ENCODE measurements at regions of chr7 and their contacts with region 1.

Region 1: DNA sequence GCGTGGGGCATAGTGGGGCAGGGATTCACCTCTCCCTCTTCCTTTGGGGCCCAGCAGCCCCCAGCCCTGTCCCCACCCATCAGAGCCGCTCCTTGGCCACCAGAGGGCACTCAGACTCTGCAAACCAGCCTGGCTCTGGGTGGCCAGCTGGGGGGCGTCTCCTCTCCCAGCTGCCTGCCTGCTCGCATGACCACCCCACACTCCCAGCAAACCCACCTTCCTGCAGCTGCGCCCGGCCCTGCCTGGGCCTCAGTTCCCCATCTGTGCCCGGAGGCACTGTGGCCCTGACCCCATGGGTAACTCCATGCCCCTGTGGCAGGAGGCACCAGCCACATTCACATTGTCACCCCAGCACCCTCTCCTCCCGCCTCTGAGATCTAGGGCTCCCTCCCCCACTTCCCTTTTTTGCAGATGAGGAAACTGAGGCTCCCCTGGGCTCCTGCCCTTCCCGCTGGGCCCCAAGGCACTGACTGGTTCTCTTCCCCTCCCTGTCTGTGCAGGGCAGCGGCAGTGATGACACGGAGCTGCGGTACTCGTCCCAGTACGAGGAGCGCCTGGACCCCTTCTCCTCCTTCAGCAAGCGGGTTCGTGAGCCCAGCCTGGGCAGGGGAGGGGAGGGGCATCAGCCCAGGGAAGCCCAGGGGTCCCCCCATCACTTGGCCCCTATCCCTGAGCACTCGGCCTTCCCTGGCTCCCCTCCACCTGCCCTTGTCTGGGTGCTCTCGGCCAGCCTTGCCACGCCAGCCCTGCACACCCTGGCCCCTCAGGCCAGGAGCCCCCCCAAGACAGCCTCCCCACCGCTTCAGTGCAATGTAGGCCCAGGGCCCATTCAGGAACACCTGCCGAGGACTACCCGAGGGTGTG is 6.9 kb upstream of the SH2B2 start:
- DNase-seq: no peak

Region 2: DNA sequence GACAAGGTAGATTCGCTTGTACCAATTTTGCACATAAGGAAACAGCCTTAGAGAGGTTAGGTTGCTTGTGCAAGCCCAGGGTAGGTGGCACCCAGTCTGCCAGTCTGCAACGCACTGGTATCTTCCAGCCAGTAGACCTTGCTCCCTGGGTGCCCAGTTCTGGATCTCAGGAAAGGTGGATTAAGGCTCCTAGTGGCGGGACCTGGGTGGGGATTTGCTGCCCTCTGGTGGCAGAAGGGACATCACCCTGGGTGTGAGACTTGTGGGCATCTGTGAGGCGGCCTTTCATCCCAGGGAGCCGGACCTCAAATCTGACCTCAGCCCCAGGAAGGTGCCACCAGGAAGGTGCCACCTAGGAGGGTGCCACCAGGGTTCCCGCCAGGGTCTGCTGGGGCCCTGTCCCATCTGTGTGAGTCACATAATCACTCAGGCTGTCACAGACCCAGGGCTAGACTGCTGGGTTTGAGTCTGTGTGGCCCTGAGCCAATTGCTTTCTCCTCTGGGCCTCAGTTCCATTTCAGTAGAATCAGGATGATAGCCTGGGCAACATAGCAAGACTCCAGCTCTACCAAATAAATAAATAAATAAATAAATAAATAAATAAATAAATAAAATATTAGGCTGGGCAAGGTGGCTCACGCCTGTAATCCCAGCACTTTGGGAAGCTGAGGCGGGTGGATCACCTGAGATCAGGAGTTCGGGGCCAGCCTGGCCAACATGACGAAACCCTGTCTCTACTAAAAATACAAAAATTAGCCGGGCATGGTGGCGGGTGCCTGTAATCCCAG is 111.1 kb after region 1 on chr7:
- intact Hi-C with region 1: loop called (anchors 2 kb)
- DNase-seq: peak; percentile 93

Region 3: DNA sequence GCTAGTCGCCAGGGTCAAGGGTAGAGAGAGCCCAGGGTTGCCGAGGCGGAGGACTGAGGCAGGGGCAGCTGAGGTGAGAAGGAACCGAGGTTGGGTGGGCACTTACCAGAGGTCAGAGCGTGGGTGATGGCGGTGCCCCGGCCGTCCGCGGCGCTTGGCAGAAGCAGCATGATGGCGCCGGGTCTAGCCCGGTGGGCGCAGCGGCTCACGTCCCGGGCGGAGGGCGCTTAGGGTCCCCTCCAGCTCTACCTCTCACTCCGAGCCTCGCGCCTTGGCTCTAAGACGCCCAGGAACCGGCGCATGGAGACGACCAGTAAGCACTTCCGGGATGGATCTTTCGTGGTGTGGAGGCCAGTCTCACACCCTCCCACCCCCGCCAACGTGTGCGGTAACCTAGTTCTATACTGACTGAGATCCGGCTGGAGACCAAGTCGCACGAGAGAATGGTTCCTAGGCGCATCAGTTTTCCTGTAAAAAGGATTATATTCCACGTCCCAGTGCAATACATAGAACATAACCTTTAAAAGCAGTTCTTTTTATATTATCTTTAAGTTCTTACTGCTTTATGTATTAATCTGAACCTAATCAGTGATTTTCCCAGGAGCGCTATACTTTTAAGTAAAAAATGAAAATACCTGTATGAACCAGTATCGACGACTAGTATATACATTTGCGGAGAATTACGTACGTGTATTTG is 1064.8 kb after region 1 on chr7 and contains the start of gene DNAJC2:
- intact Hi-C with region 1: loop called in 1 of 2 experiments (anchors 10 kb)
- DNase-seq: peak; percentile 95
- total RNA-seq, gene DNAJC2: 16.0 to 20.1 TPM

Measured in posterior vena cava (tissue), 2 donors.